Common myeloid progenitor, CD34-positive (primary cell): ENCODE measurements at regions of chr1 and their contacts with region 1.

Region 1: GRCh38 chr1:167687919-167688519 is 33.8 kb upstream of the MPZL1 start:
- DNase-seq: peak; percentile 81 to 89 (median 83)
- H3K4me3 ChIP-seq: no peak overlapping the region
- H3K27ac ChIP-seq: no peak overlapping the region
- H3K4me1 ChIP-seq: peaks cover 0 to 5% (median 4%) of the 10 kb centered on the region in 4 experiments
- H3K27me3 ChIP-seq: no peaks in the 10 kb centered on the region

Region 2: DNA sequence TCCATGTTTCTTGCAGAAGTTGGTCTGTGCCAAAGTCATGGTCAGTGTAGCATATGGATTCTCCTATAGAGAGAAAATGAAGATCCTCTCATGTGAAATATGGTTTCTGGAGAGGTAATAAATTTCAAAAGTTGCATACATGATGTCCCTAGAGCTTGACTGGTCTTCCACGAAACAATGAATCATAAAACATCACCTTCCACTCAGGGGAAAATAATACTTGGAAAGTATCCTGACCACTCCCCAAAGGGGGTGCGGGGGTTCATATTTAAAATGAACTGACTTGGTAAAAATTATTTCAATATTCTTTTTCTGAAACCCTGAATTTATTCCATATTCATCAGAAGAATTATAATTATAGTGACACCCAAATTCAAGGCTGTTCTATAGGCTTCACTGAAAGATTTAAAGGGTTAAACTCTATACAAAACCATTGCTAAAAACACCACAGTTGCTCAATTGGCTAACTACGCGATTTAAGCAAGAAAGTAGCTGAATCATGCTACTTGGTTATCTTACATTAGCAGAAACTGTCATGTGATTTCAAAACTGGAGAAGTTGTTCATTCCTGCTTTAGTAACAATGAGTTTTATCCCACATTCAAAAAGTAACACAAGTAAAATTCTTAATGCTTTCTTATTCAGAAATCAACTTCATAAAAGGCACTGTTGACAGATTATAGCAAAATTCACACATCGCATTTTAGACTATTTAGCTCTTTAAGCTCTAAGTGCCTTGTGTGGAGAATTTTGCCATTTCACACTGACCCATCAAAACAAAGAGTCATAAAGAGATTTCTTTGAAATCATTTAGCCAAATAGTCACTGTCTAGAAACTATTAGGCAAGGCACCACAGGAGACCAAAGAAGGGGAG is 139.7 kb before region 1 on chr1:
- CTCF ChIA-PET with region 1: interaction called, 15 read pairs
- POLR2A ChIA-PET with region 1: no interaction called
- DNase-seq: peak; percentile 85 to 94 (median 89)
- H3K4me3 ChIP-seq: peak overlapping the region in 6 of 7 experiments; percentile 3 to 38 (median 25)
- H3K27ac ChIP-seq: peak overlapping the region; percentile 84 to 96
- H3K4me1 ChIP-seq: peaks cover 40 to 66% (median 57%) of the 10 kb centered on the region in 4 experiments
- H3K27me3 ChIP-seq: no peaks in the 10 kb centered on the region

Region 3: DNA sequence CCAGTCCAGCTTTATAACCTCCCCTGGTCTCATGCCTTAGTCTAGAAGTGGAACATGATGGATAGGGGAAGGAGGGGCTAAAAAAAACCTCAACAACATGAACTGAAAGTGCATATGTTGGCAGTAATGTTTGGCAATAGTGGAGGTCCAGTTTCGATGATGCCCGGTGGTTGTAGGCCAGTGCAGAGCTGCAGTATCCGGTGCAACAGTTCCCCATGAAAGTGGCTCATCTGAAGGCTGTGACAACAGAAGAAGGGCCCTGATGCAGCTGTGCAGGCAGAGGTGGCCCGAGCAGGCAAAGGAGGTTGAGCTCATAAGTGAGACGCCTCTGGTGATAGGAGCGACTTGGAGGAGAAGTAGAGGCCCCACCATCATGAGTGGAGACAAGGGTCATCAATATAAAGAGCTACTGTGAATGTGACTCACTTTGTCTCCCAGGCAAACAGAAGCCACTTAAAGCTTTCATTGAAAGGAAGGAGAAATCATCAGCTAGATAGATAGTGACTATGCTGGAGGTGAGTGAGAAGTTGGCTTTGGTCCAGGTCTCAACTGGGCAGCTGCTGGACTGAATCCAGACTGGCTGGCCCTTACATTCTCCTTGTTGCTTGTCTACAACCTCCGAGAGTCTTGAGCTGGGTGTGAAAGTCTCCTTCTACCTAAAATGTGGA is 124.3 kb before region 1 on chr1:
- CTCF ChIA-PET with region 1: interaction called, 10 read pairs
- POLR2A ChIA-PET with region 1: no interaction called
- DNase-seq: no peak
- H3K4me3 ChIP-seq: no peak overlapping the region
- H3K27ac ChIP-seq: no peak overlapping the region
- H3K4me1 ChIP-seq: peaks cover 0 to 16% (median 3%) of the 10 kb centered on the region in 4 experiments
- H3K27me3 ChIP-seq: no peaks in the 10 kb centered on the region

Region 4: DNA sequence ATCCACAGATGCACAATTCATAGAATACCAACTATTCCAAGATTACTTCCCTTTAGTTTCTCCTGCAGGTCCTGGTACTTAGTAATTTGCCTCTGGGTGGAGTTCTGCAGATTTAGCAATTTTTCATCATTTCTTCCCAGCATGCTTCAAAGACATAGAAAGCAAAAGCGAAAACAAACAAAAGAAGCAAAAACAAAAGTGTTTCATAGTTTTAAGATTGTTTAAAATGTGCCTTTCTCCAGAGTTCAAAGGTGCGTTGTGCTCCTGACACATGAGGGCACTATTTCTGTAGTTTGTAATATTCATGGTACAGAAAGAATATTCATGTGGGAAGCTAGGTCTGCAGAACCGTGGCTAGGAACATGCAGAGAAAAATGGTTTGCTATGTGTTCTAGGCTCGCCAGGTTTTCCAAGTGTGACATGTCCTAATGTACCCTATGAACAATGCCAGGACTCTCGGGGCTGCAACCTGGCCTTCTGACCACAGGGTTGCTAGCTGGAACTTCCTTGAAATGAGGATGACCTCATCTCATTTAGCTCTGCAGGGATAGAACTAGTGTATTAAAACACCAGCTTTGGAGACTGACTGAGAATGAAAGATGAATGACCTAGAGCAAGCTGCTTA is 88.0 kb before region 1 on chr1:
- CTCF ChIA-PET with region 1: interaction called, 84 read pairs
- POLR2A ChIA-PET with region 1: interaction called, 3 read pairs
- DNase-seq: peak; percentile 64 to 79 (median 79)
- H3K4me3 ChIP-seq: peak overlapping the region in 1 of 7 experiments; percentile 29
- H3K27ac ChIP-seq: no peak overlapping the region
- H3K4me1 ChIP-seq: peaks cover 24 to 34% (median 33%) of the 10 kb centered on the region in 4 experiments
- H3K27me3 ChIP-seq: no peaks in the 10 kb centered on the region

Region 5: DNA sequence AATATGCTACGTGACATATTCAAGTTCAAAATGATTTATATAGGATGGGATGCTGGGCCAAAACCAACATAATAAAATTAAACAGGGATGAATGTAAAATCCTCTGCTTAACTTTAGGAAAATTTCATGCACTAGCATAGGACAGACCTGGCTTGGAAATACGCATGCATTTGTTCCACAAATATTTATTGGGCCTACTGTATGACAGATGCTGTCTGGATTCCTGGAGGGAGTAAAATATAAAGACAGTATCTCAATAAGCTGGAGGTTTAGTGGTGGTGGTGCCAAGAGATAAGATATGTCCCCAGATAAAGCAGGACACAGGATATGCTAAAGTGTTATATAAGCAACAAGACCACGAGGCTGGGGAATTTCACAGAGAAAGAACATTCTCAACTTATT is 42.9 kb before region 1 on chr1:
- CTCF ChIA-PET with region 1: interaction called, 11 read pairs
- POLR2A ChIA-PET with region 1: no interaction called
- DNase-seq: no peak
- H3K4me3 ChIP-seq: no peak overlapping the region
- H3K27ac ChIP-seq: peak overlapping the region; percentile 25 to 45
- H3K4me1 ChIP-seq: peaks cover 17 to 77% (median 49%) of the 10 kb centered on the region in 4 experiments
- H3K27me3 ChIP-seq: no peaks in the 10 kb centered on the region

Region 6: DNA sequence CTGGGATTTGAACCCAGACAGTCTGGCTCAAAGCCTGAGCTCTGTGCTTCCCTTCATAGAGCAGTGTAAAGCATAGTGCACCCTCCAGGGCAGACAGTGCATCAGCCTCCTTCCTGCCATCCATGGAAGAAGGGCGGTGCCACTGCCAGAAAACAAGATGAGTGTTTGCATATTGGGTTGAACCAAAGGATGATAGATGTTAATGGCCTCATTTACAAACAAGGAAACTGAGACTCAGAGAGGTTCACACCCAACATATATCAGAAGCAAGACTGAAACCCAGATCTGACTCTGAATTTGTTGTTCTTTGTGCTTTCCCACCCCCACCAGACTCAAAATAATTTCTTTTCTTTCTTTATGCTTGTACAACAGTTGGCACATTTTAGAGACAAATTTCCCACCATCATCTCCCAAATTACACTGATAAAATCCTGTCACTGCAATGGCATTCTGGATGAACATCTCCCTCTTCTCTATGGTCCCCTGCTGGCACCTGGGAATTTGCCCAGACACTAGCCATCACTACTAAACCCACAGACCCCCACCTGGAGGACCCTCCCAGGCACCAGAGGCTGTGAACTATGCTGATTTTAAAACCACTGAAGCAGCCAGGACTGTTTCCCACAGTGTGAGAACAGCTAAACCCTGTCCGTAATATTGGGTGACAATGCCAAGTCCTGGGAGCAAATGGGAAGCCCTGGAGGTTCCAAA is 11.7 kb before region 1 on chr1:
- CTCF ChIA-PET with region 1: interaction called, 30 read pairs
- POLR2A ChIA-PET with region 1: no interaction called
- DNase-seq: no peak
- H3K4me3 ChIP-seq: no peak overlapping the region
- H3K27ac ChIP-seq: peak overlapping the region in 1 of 2 experiments; percentile 44
- H3K4me1 ChIP-seq: peaks cover 3 to 15% (median 4%) of the 10 kb centered on the region in 4 experiments
- H3K27me3 ChIP-seq: no peaks in the 10 kb centered on the region

Region 7: GRCh38 chr1:167784876-167785550 is 97.0 kb after region 1 on chr1:
- CTCF ChIA-PET with region 1: no interaction called
- POLR2A ChIA-PET with region 1: no interaction called
- DNase-seq: no peak
- H3K4me3 ChIP-seq: no peak overlapping the region
- H3K27ac ChIP-seq: no peak overlapping the region
- H3K4me1 ChIP-seq: no peaks in the 10 kb centered on the region
- H3K27me3 ChIP-seq: no peaks in the 10 kb centered on the region